Dorsolateral prefrontal cortex (tissue), 120 donors: ENCODE measurements at regions of chr5 and their contacts with region 1.

Region 1: GRCh38 chr5:91110686-91111085 is 272.4 kb downstream of the ARRDC3 start:
- DNase-seq: no peak
- H3K4me3 ChIP-seq: peak overlapping the region in 15 of 59 donors; percentile 0 to 46 (median 21)
- H3K27ac ChIP-seq: peak overlapping the region in 8 of 59 donors; percentile 4 to 46 (median 14)
- H3K27me3 ChIP-seq: no peaks in the 10 kb centered on the region
- CTCF ChIP-seq: no peak

Region 2: DNA sequence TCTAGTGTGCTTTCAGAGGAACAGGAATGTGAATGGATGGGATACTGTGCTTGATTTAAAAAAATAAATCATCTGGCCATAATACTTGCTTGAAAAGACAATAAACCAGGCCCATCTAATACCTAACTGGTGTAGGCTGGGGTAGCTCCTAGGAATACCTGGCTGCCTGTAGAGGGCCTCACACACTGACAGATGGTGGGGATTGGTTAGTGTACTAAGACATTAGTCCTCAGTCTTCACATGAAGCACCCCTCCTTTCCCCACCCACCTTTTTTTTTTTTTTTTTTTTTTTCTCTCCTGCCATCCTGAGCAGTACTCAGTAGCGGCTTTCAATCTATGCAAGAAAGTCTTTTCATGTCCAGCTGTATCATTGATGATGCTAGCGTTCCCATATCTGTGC is 421.6 kb before region 1 on chr5:
- intact Hi-C with region 1: no loop called
- DNase-seq: no peak
- H3K4me3 ChIP-seq: no peak overlapping the region
- H3K27ac ChIP-seq: no peak overlapping the region
- H3K27me3 ChIP-seq: no peaks in the 10 kb centered on the region
- CTCF ChIP-seq: no peak

Region 3: GRCh38 chr5:91162534-91163381 is 52.1 kb after region 1 on chr5:
- intact Hi-C with region 1: loop called in 1 of 2 experiments (anchors 5 kb)
- DNase-seq: peak in 5 of 10 donors; percentile 34 to 69 (median 51)
- H3K4me3 ChIP-seq: no peak overlapping the region
- H3K27ac ChIP-seq: peak overlapping the region in 45 of 59 donors; percentile 3 to 89 (median 56)
- H3K27me3 ChIP-seq: no peaks in the 10 kb centered on the region
- CTCF ChIP-seq: no peak

Region 4: GRCh38 chr5:91219803-91220371 is 109.2 kb after region 1 on chr5:
- intact Hi-C with region 1: loop called in 1 of 2 experiments (anchors 5 kb)
- DNase-seq: peak in 2 of 10 donors; percentile 48 to 53
- H3K4me3 ChIP-seq: no peak overlapping the region
- H3K27ac ChIP-seq: no peak overlapping the region
- H3K27me3 ChIP-seq: no peaks in the 10 kb centered on the region
- CTCF ChIP-seq: peak in 50 of 56 donors; percentile 12 to 69 (median 48)